Right ventricle myocardium inferior (tissue), 1 donor: ENCODE measurements at regions of chr14 and their contacts with region 1.

Region 1: DNA sequence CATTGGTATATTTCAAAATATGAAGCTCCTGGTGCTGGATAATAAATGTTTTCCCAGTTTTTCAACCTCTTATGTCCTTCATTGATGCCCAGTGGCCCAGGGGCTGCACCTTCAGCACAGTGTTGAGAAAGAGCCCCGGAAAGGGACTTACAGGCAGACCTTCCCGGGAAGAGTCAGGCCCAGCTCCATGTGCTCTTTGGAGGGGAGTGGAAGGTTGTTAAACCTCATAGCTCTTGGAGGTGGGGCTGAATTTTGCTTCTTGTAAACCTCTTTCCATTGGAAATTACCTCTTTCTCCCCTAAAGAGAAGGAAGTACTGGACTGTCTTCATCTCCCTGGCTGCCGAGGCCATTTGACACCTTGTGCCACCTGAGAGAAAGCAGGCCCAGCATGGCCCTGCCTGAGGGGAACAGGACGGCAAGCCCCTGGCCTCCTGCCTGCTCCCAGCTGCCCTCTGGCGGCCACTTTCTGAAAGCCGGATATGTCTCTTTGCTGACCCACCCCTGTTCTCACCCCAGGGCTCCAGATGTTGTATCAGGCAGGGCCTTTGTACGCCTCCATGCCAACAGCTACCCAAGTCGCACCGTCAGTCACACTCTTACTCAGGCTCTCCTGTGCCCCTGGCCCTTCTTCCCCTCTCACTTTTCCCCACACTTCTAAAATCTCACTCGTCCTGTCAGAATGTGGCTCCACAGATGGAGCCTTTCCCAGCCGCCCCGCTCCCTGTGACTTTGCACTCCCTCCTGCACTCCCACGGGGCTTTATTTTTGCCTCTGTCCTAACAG is 43.0 kb downstream of the EVL start:
- DNase-seq: peak; percentile 92
- ATAC-seq: peak; percentile 82

Region 2: GRCh38 chr14:99982537-99983250 is 125.5 kb before region 1 on chr14:
- intact Hi-C with region 1: loop called (anchors 1 kb)
- DNase-seq: no peak
- ATAC-seq: peak; percentile 91

Region 3: GRCh38 chr14:100067971-100068959 is 40.0 kb before region 1 on chr14:
- intact Hi-C with region 1: loop called (anchors 5 kb)
- DNase-seq: peak; percentile 79
- ATAC-seq: peak; percentile 17

Region 4: DNA sequence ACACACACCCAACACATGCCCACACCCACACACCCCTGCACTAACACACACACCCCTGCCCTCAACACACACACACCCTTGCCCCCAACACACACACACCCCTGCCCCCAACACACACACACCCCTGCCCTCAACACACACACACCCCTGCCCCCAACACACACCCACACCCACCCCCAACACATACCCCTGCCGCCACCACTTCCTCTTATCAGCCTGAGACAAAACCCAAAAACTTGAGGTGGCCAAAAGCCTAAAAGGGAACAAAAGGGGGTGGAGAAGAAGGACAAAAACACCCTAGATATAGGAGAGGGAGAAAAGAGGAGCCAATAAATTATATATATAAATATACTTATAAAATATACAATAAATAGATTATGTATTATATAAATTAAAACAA is 60.3 kb after region 1 on chr14:
- intact Hi-C with region 1: no loop called
- DNase-seq: peak; percentile 5
- ATAC-seq: no peak